Mammary epithelial cell (primary cell): ENCODE measurements at regions of chr4 and their contacts with region 1.

Region 1: DNA sequence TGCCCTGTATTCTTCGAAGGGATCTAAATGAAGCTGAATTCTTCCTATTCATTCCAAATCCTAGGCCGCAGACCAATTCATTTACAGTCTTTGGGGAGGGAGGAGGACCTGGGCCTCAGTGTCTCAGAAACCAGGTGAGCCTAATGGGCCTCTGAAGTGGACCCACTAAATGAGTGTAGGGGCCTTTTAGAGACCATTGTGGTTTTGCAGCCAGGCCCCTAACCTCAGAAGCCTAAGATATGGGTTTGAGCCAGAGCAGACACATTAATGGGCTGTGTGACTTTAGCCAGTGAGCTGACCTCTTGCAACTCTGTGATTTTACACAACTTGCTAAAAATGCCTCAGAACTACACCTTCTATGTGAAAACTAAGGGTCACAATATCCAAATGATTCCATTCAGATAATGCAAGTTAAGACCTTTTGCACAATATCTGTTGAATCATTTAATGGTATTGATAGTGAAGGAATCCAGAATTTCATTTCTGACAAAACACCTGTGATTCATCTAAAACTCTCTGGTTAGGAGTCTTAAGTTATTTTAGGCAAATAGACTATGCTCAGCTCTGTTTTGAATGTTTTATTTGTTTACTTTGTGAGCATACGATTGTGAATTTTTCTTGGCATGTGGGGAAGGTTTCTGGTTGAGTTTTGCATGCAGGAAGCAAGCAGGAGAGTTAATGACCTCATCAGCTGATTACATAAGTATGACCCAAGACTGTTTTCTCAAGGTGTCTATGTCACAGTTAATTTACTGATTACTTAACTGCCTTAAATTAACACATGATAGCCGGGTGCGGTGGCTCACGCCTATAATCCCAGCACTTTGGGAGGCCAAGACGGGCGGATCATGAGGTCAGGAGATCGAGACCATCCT is 75.0 kb downstream of the EVC start:
- DNase-seq: peak; percentile 62
- H3K4me3 ChIP-seq: no peak overlapping the region
- H3K27ac ChIP-seq: no peak overlapping the region
- H3K4me1 ChIP-seq: no peaks in the 10 kb centered on the region
- H3K27me3 ChIP-seq: no peaks in the 10 kb centered on the region
- CTCF ChIP-seq: no peak

Region 2: DNA sequence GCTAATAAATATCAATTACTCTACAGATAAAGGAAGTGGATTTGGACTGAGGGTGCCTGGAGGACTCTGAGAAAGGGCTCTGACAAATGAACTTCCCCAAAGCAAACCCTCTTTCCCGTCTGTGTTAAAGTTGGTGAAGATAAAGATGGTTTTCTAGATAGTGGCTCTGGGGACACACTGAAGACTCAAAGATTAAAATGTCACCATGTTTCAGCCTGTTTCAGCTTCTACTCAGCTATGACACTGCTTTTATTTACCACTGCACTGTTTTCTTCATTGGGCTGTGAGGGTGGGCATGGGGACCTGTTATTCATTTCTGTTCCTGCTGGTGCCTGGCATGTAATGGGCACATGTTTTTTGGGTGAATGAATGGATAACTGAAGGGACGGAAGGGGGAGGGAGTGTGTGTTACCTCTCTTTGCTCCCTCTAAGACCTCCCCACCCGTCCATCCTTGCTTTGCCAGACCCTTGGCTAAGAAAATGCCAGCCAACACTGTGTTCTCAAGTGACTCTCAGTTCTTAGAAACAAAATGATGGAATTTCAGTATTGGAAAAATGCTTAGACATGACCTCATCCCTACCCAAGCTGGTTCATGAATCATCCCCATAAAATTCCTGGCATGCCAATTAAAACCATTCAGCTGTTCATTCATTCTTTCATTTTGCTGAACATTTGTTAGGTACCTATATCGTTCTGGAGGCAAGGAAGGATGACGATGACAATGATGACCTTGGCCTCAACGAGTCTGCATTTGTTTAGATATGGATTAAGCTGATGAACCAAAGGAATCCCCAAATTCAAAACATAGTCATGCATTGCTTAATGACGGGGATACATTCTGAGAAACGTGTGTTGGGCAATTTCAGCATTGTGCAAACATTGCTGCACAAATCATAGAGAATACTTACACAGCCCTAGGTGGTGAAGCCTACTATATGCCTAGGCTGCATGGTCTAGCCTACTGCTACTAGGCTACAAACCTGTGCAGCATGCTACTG is 748.2 kb before region 1 on chr4:
- CTCF ChIA-PET with region 1: no interaction called
- dilution Hi-C with region 1: no loop called
- in situ Hi-C with region 1: loop called in 1 of 2 experiments (anchors 25 kb)
- intact Hi-C with region 1: no loop called
- DNase-seq: peak; percentile 91
- H3K4me3 ChIP-seq: no peak overlapping the region
- H3K27ac ChIP-seq: no peak overlapping the region
- H3K4me1 ChIP-seq: peaks cover 13% of the 10 kb centered on the region
- H3K27me3 ChIP-seq: no peaks in the 10 kb centered on the region
- CTCF ChIP-seq: no peak

Region 3: DNA sequence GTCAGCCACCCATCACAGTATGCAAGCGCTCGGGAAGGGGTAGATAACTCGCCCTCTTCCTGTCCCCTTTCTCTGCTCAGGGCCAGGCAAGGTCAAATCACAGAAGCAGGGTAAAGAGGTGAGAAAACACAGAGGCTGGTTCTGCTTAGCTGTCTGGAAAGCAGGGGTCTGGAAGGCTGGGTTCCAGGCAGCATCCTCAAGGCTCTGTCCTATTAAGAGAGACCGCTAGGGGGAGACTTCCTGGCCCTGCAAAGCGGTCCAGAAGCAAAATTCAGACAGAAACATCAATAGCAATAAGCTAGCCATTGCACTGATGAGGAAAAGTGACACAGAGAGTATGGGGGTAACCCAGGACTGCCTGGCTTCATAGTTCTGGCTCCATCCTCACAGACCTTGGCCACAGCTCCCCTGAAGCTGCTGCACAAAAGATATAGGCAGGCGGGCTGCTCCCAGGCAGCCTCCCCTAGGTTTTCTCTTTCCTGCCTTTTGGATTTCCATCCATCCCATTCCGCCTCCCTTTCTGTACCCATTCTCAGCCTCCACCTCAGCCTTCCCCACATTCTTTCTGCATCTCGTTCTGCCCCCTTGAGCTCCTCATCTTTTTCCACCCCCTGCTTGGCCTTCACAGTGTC is 386.1 kb before region 1 on chr4:
- CTCF ChIA-PET with region 1: no interaction called
- dilution Hi-C with region 1: no loop called
- in situ Hi-C with region 1: loop called (anchors 25 kb)
- intact Hi-C with region 1: loop called (anchors 1 kb)
- DNase-seq: no peak
- H3K4me3 ChIP-seq: no peak overlapping the region
- H3K27ac ChIP-seq: no peak overlapping the region
- H3K4me1 ChIP-seq: no peaks in the 10 kb centered on the region
- H3K27me3 ChIP-seq: no peaks in the 10 kb centered on the region
- CTCF ChIP-seq: peak; percentile 72 to 86

Region 4: DNA sequence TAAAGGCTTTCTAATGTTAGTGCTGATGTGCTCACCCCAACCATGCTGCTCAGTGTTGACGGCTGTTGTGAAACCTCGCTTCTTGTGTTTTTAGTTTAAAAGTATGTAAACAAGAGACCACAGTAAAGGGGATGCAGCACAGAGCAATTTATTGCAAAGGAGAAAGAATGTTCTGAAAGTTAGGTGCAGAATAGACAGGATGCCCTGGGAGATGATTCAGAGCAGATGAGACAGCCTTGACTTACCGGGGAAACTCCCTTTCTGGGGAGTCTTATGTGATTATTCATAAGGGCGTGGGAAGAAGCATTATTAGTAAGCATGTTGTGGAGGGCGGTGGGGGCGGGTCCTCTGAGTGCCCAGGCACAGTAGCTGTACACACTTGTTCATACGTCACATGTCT is 27.3 kb before region 1 on chr4:
- CTCF ChIA-PET with region 1: no interaction called
- dilution Hi-C with region 1: no loop called
- in situ Hi-C with region 1: no loop called
- intact Hi-C with region 1: loop called (anchors 2 kb)
- DNase-seq: peak; percentile 98
- H3K4me3 ChIP-seq: no peak overlapping the region
- H3K27ac ChIP-seq: peak overlapping the region; percentile 89
- H3K4me1 ChIP-seq: peaks cover 27% of the 10 kb centered on the region
- H3K27me3 ChIP-seq: no peaks in the 10 kb centered on the region
- CTCF ChIP-seq: no peak